Left cardiac atrium (tissue), 4 donors: ENCODE measurements at regions of chr17 and their contacts with region 1.

Region 1: GRCh38 chr17:80101011-80101945 is at the start of gene GAA:
- DNase-seq: peak; percentile 91
- ATAC-seq: peak; percentile 92 to 95
- total RNA-seq, gene GAA: 43.8 to 48.7 TPM

Region 2: GRCh38 chr17:79810130-79811010 is 290.9 kb before region 1 on chr17:
- intact Hi-C with region 1: no loop called
- DNase-seq: peak; percentile 82
- ATAC-seq: peak; percentile 75 to 84

Region 3: DNA sequence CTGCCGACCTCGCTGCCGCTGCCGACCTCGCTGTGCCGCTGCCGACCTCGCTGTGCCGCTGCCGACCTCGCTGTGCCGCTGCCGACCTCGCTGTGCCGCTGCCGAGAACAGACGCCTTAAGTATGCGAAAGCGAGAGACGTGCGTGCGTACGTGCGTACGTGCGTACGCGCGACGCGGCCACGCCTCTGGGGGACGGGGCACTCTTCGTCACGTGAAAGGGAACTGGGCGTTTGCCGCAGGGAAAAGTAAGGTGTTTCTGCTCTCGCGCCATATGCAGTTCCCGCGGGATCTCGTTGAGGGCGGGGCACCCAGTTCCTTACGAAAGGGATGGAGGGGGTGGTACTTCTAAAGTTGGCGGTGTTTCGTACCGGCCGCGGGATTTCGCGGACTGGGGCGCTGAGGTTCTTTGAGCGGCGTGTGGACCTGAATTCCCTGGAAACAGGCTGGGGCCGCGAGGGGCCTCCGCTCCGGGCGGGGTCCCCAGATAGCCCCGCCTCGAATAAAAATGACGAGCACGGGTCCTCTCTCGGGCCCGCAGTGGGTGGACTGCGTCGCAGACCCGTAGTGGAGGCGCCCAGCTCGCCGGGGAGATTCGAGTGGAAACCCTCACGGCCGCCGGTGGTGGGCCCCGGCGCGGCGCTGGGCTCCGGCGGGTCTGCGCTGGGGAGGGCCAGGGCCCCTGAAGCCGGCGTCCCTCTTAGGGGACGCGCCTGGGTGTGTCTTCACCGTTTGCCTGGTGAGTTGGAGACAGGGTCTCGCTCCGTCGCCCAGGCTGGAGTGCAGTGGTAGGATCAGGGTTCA is 46.0 kb after region 1 on chr17 and contains the start of gene EIF4A3:
- intact Hi-C with region 1: loop called in 1 of 2 experiments (anchors 5 kb)
- DNase-seq: peak; percentile 99
- ATAC-seq: peak; percentile 97 to 98
- total RNA-seq, gene EIF4A3: 36.6 to 46.9 TPM

Region 4: DNA sequence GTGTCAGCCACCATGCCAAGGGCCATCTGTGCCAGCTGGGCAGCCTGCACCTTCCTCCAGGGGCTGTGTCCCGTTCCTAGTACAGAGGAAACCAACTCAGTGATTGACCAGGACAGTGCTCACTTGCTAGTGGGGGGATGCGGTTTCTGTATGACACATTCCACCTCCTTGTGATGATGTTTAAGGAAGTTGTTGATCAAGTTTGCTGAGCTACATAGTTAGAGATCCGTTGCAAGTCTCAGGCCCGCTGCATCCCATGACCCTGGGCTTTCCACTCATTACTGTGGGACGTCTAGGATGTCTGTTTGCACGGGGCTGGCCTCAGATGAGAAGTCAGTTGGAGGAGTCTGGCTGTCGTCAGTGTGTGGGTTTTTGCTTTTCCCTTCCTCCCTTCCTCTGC is 192.9 kb after region 1 on chr17:
- intact Hi-C with region 1: no loop called
- DNase-seq: peak; percentile 15
- ATAC-seq: peak in 1 of 2 donors; percentile 44